Caco-2 (cell line): ENCODE measurements at regions of chr7 and their contacts with region 1.

Region 1: GRCh38 chr7:7932580-7932979 is 36.0 kb upstream of the GLCCI1 start:
- DNase-seq: no peak
- H3K4me3 ChIP-seq: no peak overlapping the region
- H3K4me3 Mint-ChIP-seq: no peak overlapping the region
- H3K27ac Mint-ChIP-seq: no peak overlapping the region
- H3K4me1 ChIP-seq: no peaks in the 10 kb centered on the region
- H3K4me1 Mint-ChIP-seq: no peaks in the 10 kb centered on the region
- H3K27me3 ChIP-seq: no peaks in the 10 kb centered on the region
- H3K27me3 Mint-ChIP-seq: no peaks in the 10 kb centered on the region
- CTCF ChIP-seq: no peak

Region 2: GRCh38 chr7:7237201-7237977 is 695.2 kb before region 1 on chr7:
- CTCF ChIA-PET with region 1: no interaction called
- POLR2A ChIA-PET with region 1: no interaction called
- intact Hi-C with region 1: no loop called
- DNase-seq: no peak
- H3K4me3 ChIP-seq: no peak overlapping the region
- H3K4me3 Mint-ChIP-seq: no peak overlapping the region
- H3K27ac Mint-ChIP-seq: no peak overlapping the region
- H3K4me1 ChIP-seq: no peaks in the 10 kb centered on the region
- H3K4me1 Mint-ChIP-seq: no peaks in the 10 kb centered on the region
- H3K27me3 ChIP-seq: no peaks in the 10 kb centered on the region
- H3K27me3 Mint-ChIP-seq: no peaks in the 10 kb centered on the region
- CTCF ChIP-seq: no peak

Region 3: DNA sequence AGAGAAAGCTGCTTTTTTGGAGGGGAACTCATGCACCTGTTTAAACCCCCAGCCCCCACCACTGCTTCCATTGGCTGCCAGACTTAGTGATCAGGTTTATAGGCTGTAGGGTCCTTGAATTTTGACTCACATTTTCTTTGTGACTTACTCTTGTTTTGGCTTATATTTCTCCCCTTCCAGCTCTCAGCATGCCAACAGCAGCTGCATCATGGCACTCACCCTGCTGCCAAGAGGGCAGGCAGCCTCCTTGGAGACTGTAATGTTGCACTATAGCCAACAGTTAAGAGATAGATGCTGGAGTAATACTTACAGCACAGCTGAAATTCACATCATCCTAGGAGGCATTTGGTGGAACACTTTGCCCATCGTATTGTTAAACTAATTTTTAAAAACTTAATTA is 62.0 kb before region 1 on chr7:
- CTCF ChIA-PET with region 1: no interaction called
- POLR2A ChIA-PET with region 1: no interaction called
- intact Hi-C with region 1: loop called (anchors 2 kb)
- DNase-seq: no peak
- H3K4me3 ChIP-seq: no peak overlapping the region
- H3K4me3 Mint-ChIP-seq: no peak overlapping the region
- H3K27ac Mint-ChIP-seq: no peak overlapping the region
- H3K4me1 ChIP-seq: no peaks in the 10 kb centered on the region
- H3K4me1 Mint-ChIP-seq: no peaks in the 10 kb centered on the region
- H3K27me3 ChIP-seq: no peaks in the 10 kb centered on the region
- H3K27me3 Mint-ChIP-seq: no peaks in the 10 kb centered on the region
- CTCF ChIP-seq: no peak

Region 4: GRCh38 chr7:7956531-7957128 is 24.1 kb after region 1 on chr7:
- CTCF ChIA-PET with region 1: no interaction called
- POLR2A ChIA-PET with region 1: no interaction called
- intact Hi-C with region 1: no loop called
- DNase-seq: no peak
- H3K4me3 ChIP-seq: no peak overlapping the region
- H3K4me3 Mint-ChIP-seq: no peak overlapping the region
- H3K27ac Mint-ChIP-seq: no peak overlapping the region
- H3K4me1 ChIP-seq: peaks cover 13% of the 10 kb centered on the region; the same call in 1 of the 2 replicates
- H3K4me1 Mint-ChIP-seq: peaks cover 8% of the 10 kb centered on the region
- H3K27me3 ChIP-seq: no peaks in the 10 kb centered on the region
- H3K27me3 Mint-ChIP-seq: no peaks in the 10 kb centered on the region
- CTCF ChIP-seq: no peak